CD8-positive, alpha-beta T cell (primary cell): ENCODE measurements at regions of chr6 and their contacts with region 1.

Region 1: GRCh38 chr6:169810066-169810989 is 58.9 kb downstream of the ERMARD start:
- DNase-seq: no peak
- ATAC-seq: no peak
- H3K4me3 ChIP-seq: no peak overlapping the region
- H3K4me3 Mint-ChIP-seq: no peak overlapping the region
- H3K27ac ChIP-seq: no peak overlapping the region
- H3K27ac Mint-ChIP-seq: no peak overlapping the region
- H3K4me1 ChIP-seq: peaks cover 46% of the 10 kb centered on the region
- H3K4me1 Mint-ChIP-seq: peaks cover 43% of the 10 kb centered on the region
- H3K27me3 ChIP-seq: peaks cover 0 to 7% of the 10 kb centered on the region in 2 experiments
- H3K27me3 Mint-ChIP-seq: peaks cover 29% of the 10 kb centered on the region
- CTCF ChIP-seq: no peak

Region 2: GRCh38 chr6:169839898-169840631 is 29.7 kb after region 1 on chr6:
- CTCF ChIA-PET with region 1: no interaction called
- POLR2A ChIA-PET with region 1: no interaction called
- intact Hi-C with region 1: loop called in 1 of 2 experiments (anchors 2 kb)
- DNase-seq: peak in 1 of 9 experiments; percentile 36
- ATAC-seq: no peak
- H3K4me3 ChIP-seq: no peak overlapping the region
- H3K4me3 Mint-ChIP-seq: no peak overlapping the region
- H3K27ac ChIP-seq: no peak overlapping the region
- H3K27ac Mint-ChIP-seq: no peak overlapping the region
- H3K4me1 ChIP-seq: no peaks in the 10 kb centered on the region
- H3K4me1 Mint-ChIP-seq: no peaks in the 10 kb centered on the region
- H3K27me3 ChIP-seq: no peaks in the 10 kb centered on the region
- H3K27me3 Mint-ChIP-seq: peaks cover 7% of the 10 kb centered on the region
- CTCF ChIP-seq: no peak